ENCODE measurements at regions of chr19 and their contacts with region 1.

Region 1: GRCh38 chr19:19053508-19054314 is 10.1 kb upstream of the SLC25A42 start:
- DNase-seq: peak; percentile 50
- ATAC-seq: peak; percentile 77
- H3K4me3 ChIP-seq: no peak overlapping the region
- H3K27ac ChIP-seq: no peak overlapping the region
- H3K4me1 ChIP-seq: peaks cover 13% of the 10 kb centered on the region
- H3K27me3 ChIP-seq: no peaks in the 10 kb centered on the region
- CTCF ChIP-seq: peak; percentile 88
- EP300 ChIP-seq: no peak
- POLR2A ChIP-seq: no peak
- RAD21 ChIP-seq: peak; percentile 95

Region 2: DNA sequence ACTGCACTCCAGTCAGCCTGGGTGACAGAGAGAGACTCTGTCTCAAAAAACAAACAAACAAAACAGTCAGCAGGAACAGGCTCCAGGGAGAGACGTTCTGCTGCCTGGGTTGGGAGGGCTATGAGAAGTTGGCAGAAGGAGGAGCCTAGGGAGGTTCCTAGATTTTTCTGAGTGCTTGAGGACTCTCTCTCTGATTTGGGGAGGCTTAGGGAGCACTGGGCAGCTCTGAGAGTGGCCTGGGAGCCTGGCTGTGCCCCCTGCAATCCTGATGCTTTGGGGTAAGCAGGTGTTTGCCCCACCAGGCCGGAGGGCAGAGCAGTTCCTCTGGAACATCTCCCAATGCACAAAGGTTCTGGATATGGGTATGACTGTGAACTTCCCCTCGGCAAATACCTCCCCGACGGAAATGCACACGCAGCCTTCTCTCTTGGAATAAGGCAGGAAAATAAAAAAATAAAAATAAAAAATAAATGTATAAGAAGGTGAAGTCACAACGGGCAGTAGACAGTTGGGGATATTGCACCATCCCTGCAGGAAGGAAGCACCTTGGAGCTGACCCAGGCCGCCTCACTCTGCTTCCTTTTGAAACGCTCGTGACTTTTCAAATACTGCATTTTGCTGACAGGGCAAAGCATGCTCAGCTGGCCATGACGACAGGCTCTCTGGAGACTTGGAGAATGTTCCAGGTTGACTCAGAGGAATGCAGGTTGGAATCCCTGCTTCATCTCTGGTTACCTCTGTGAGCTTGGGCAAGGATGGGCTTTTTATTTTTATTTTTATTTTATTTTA is 86.2 kb before region 1 on chr19:
- CTCF ChIA-PET with region 1: no interaction called
- POLR2A ChIA-PET with region 1: no interaction called
- in situ Hi-C with region 1: no loop called
- intact Hi-C with region 1: no loop called
- DNase-seq: no peak
- ATAC-seq: peak; percentile 63
- H3K4me3 ChIP-seq: peak overlapping the region; percentile 12 to 60 (median 26); a peak in 4 of 6 replicates
- H3K27ac ChIP-seq: no peak overlapping the region
- H3K4me1 ChIP-seq: peaks cover 70% of the 10 kb centered on the region
- H3K27me3 ChIP-seq: no peaks in the 10 kb centered on the region
- CTCF ChIP-seq: no peak
- EP300 ChIP-seq: no peak; a peak in 1 of 4 replicates
- POLR2A ChIP-seq: no peak
- RAD21 ChIP-seq: no peak

Region 3: GRCh38 chr19:19110410-19111135 is 56.9 kb after region 1 on chr19:
- CTCF ChIA-PET with region 1: interaction called, 27 read pairs
- POLR2A ChIA-PET with region 1: no interaction called
- in situ Hi-C with region 1: loop called (anchors 5 kb)
- intact Hi-C with region 1: no loop called
- DNase-seq: no peak
- ATAC-seq: no peak
- H3K4me3 ChIP-seq: no peak overlapping the region
- H3K27ac ChIP-seq: no peak overlapping the region
- H3K4me1 ChIP-seq: peaks cover 49% of the 10 kb centered on the region
- H3K27me3 ChIP-seq: no peaks in the 10 kb centered on the region
- CTCF ChIP-seq: no peak
- EP300 ChIP-seq: no peak
- POLR2A ChIP-seq: no peak
- RAD21 ChIP-seq: no peak

Region 4: GRCh38 chr19:19115954-19116353 is 62.2 kb after region 1 on chr19:
- CTCF ChIA-PET with region 1: interaction called, 27 read pairs
- POLR2A ChIA-PET with region 1: no interaction called
- in situ Hi-C with region 1: loop called (anchors 5 kb)
- intact Hi-C with region 1: no loop called
- DNase-seq: peak; percentile 45
- ATAC-seq: peak; percentile 63
- H3K4me3 ChIP-seq: no peak overlapping the region
- H3K27ac ChIP-seq: no peak overlapping the region
- H3K4me1 ChIP-seq: peaks cover 37% of the 10 kb centered on the region
- H3K27me3 ChIP-seq: no peaks in the 10 kb centered on the region
- CTCF ChIP-seq: peak; percentile 79
- EP300 ChIP-seq: no peak
- POLR2A ChIP-seq: no peak
- RAD21 ChIP-seq: peak; percentile 84